CD4-positive, alpha-beta memory T cell (primary cell): ENCODE measurements at regions of chr21 and their contacts with region 1.

Region 1: DNA sequence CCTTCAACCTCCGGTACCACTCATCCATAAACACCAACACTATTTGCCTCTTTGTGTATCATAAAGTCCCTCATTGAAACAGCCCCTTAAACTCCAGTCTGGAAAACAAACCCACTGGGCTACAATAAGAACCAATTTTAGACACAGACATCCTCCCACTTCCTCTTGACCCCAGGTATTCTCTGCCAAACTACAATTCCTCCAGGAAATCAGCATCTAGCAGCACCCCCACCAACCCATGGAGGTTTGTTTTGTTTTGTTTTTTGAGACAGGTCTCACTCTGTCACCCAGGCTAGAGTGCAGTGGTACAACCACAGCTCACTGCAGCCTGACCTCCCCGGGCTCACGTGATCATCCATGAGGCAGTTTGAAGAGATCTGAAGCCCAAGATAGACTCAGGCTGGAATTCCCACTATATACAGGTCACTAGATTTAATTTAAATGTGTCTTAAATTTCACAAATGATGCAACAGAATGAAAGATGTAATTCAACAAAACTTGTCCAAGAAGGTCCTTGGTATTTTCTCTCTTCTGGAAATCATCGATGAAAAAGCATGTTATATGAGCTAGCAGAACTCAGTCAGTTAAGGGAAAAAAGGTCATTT is 30.4 kb downstream of the TCP10L start:
- DNase-seq: no peak
- H3K4me3 ChIP-seq: no peak overlapping the region
- H3K4me3 Mint-ChIP-seq: no peak overlapping the region
- H3K27ac ChIP-seq: no peak overlapping the region
- H3K27ac Mint-ChIP-seq: peak overlapping the region in 4 of 7 donors; percentile 2 to 30 (median 9)
- H3K4me1 ChIP-seq: no peaks in the 10 kb centered on the region
- H3K4me1 Mint-ChIP-seq: peaks cover 0 to 15% (median 4%) of the 10 kb centered on the region in 4 donors
- H3K27me3 ChIP-seq: no peaks in the 10 kb centered on the region
- H3K27me3 Mint-ChIP-seq: no peaks in the 10 kb centered on the region

Region 2: GRCh38 chr21:32514275-32515055 is 40.5 kb before region 1 on chr21:
- CTCF ChIA-PET with region 1: no interaction called
- POLR2A ChIA-PET with region 1: no interaction called
- intact Hi-C with region 1: loop called (anchors 5 kb)
- DNase-seq: no peak
- H3K4me3 ChIP-seq: no peak overlapping the region
- H3K4me3 Mint-ChIP-seq: no peak overlapping the region
- H3K27ac ChIP-seq: no peak overlapping the region
- H3K27ac Mint-ChIP-seq: no peak overlapping the region
- H3K4me1 ChIP-seq: no peaks in the 10 kb centered on the region
- H3K4me1 Mint-ChIP-seq: peaks cover 0 to 4% (median under 1%) of the 10 kb centered on the region in 4 donors
- H3K27me3 ChIP-seq: no peaks in the 10 kb centered on the region
- H3K27me3 Mint-ChIP-seq: no peaks in the 10 kb centered on the region

Region 3: GRCh38 chr21:32587120-32587519 is 32.2 kb after region 1 on chr21:
- CTCF ChIA-PET with region 1: no interaction called
- POLR2A ChIA-PET with region 1: no interaction called
- intact Hi-C with region 1: no loop called
- DNase-seq: no peak
- H3K4me3 ChIP-seq: no peak overlapping the region
- H3K4me3 Mint-ChIP-seq: no peak overlapping the region
- H3K27ac ChIP-seq: no peak overlapping the region
- H3K27ac Mint-ChIP-seq: no peak overlapping the region
- H3K4me1 ChIP-seq: no peaks in the 10 kb centered on the region
- H3K4me1 Mint-ChIP-seq: peaks cover 0 to 4% (median under 1%) of the 10 kb centered on the region in 4 donors
- H3K27me3 ChIP-seq: no peaks in the 10 kb centered on the region
- H3K27me3 Mint-ChIP-seq: peaks cover 0 to 4% of the 10 kb centered on the region in 2 donors

Region 4: GRCh38 chr21:32612075-32612998 is 57.4 kb after region 1 on chr21 and contains the start of gene CFAP298:
- CTCF ChIA-PET with region 1: no interaction called
- POLR2A ChIA-PET with region 1: no interaction called
- intact Hi-C with region 1: no loop called
- DNase-seq: peak; percentile 90 to 97 (median 92)
- H3K4me3 ChIP-seq: peak within 1 kb of the TSS; percentile 95 to 99
- H3K4me3 Mint-ChIP-seq: peak within 1 kb of the TSS; percentile 91 to 98 (median 96)
- H3K27ac ChIP-seq: peak within 1 kb of the TSS; percentile 86
- H3K27ac Mint-ChIP-seq: peak within 1 kb of the TSS; percentile 98 to 99 (median 99)
- H3K4me1 ChIP-seq: peaks cover 12% of the 10 kb centered on the region
- H3K4me1 Mint-ChIP-seq: peaks cover 8 to 32% (median 20%) of the 10 kb centered on the region in 4 donors
- H3K27me3 ChIP-seq: no peaks in the 10 kb centered on the region
- H3K27me3 Mint-ChIP-seq: peaks cover 1 to 2% of the 10 kb centered on the region in 2 donors
- total RNA-seq, gene CFAP298: 29.4 to 39.1 TPM

Region 5: GRCh38 chr21:32794644-32795079 is 239.7 kb after region 1 on chr21:
- CTCF ChIA-PET with region 1: no interaction called
- POLR2A ChIA-PET with region 1: no interaction called
- intact Hi-C with region 1: no loop called
- DNase-seq: no peak
- H3K4me3 ChIP-seq: no peak overlapping the region
- H3K4me3 Mint-ChIP-seq: no peak overlapping the region
- H3K27ac ChIP-seq: no peak overlapping the region
- H3K27ac Mint-ChIP-seq: no peak overlapping the region
- H3K4me1 ChIP-seq: no peaks in the 10 kb centered on the region
- H3K4me1 Mint-ChIP-seq: no peaks in the 10 kb centered on the region
- H3K27me3 ChIP-seq: no peaks in the 10 kb centered on the region
- H3K27me3 Mint-ChIP-seq: no peaks in the 10 kb centered on the region